PC-3 (cell line): ENCODE measurements at regions of chr3 and their contacts with region 1.

Region 1: DNA sequence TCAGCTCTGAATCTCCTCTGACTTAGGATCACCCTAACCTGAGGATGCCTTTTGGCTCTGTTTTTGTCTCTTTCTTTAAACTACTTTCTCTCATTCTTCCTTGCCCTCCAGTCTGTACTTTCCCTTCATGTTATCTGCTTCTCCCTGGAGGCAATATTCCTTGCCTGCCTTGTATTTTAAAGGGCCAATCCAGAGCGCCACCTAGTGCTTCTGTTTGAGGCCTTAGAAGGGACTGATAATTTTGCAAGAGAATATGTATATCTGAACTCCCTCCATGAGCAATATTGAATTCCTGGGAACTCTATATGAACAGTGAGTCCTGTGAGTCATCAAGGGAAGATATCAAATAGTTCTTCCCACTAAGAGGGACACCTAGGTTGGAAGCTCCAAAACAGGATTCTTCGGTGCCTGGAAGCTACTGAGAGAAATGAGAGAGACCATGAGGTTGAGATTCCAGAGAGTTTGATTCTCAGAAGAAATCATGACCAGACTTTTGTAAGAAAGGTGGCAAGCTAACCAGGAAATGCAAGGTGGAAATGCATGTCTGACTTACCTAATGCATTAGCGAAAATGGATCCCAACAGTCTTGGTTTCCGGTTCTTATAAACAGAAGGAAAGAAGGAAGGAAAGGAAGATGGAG is 203.8 kb upstream of the CD96 start:
- DNase-seq: peak; percentile 92
- ATAC-seq: peak; percentile 89
- H3K4me3 ChIP-seq: no peak overlapping the region
- H3K27ac ChIP-seq: no peak overlapping the region
- H3K4me1 ChIP-seq: peaks cover 19% of the 10 kb centered on the region
- H3K27me3 ChIP-seq: no peaks in the 10 kb centered on the region
- CTCF ChIP-seq: peak; percentile 98

Region 2: DNA sequence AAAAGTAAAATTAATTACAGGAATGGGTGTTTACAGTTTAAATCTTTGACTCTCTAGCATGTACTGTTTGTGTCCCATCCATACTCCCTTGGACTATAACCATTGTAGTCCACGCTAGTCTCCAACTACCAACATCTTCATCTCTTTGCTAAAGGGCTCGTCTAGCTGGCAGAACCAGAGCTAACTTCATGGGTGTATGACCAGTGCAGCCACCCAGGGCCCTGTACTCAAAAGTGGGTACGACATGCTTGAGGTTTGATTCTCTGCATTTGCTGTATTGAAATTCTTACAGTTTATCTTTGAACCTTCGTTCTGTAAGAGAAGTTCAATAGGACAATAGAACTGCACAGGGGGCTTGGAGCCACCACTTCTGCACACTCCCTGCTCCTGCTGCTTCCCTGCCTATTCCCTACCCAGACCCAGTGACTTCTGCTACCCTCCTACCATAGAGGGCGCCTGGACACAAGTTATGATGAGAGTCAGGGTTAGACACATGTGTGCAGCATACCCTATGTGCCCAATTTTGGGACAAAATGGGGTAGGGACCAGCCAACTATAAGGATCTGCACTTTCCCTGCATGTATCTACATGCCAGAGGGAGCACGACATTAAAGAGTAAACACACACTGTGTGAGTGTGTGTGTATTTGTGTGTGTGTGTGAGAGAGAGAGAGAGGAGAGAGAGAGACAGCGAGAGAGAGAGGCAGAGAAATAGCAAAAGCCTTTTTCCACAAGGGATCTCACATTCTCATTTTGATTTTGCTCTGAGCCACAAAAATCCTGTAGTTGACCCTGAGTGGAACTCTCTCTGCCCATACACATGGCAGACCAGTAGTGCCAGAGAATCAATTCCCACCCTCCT is 325.6 kb before region 1 on chr3:
- CTCF ChIA-PET with region 1: no interaction called
- POLR2A ChIA-PET with region 1: no interaction called
- intact Hi-C with region 1: loop called (anchors 10 kb)
- DNase-seq: peak; percentile 60
- ATAC-seq: peak; percentile 98
- H3K4me3 ChIP-seq: no peak overlapping the region
- H3K27ac ChIP-seq: no peak overlapping the region
- H3K4me1 ChIP-seq: no peaks in the 10 kb centered on the region
- H3K27me3 ChIP-seq: no peaks in the 10 kb centered on the region
- CTCF ChIP-seq: peak; percentile 66

Region 3: DNA sequence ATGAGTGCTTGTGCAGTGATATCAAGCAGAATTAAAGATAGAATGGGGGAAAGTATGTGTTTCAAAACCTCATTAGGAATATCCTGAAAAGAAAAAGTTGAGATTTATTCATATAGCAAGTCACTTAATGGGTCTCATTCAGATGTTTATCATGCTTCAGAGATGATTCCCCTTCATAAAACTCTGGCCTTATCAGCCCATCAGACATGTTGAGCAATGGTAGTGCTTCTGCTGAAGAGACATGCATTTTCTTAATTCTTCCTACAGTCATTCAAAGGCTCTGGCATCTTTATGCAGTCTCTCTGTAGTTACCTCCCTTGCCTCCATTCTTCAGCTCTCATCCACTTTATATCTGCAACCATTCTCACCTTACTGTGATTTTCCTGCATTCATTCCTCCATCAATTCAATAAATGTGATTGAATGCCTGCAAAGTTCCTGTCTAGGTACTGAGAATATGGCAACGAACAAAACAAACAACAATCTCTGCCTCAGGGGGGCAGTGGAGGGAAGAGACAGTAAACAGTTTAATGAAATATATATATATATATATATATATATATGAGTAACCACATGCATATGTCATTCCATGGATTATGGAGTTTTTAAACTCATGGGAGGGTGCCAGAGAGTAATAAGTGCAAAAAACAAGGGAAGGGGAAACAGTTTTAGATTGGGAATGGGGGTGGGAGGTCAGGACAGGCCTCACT is 128.0 kb before region 1 on chr3:
- CTCF ChIA-PET with region 1: no interaction called
- POLR2A ChIA-PET with region 1: no interaction called
- intact Hi-C with region 1: loop called (anchors 5 kb)
- DNase-seq: peak; percentile 62
- ATAC-seq: peak; percentile 71
- H3K4me3 ChIP-seq: no peak overlapping the region
- H3K27ac ChIP-seq: no peak overlapping the region
- H3K4me1 ChIP-seq: 0 out of 2 replicates have a peak, but pooled peaks cover 4% of the 10 kb centered on the region
- H3K27me3 ChIP-seq: no peaks in the 10 kb centered on the region
- CTCF ChIP-seq: peak; percentile 43

Region 4: GRCh38 chr3:111277226-111277625 is 61.0 kb before region 1 on chr3:
- CTCF ChIA-PET with region 1: no interaction called
- POLR2A ChIA-PET with region 1: no interaction called
- intact Hi-C with region 1: loop called (anchors 1 kb)
- DNase-seq: peak; percentile 37
- ATAC-seq: peak; percentile 37; the same call in 1 of the 2 replicates
- H3K4me3 ChIP-seq: no peak overlapping the region
- H3K27ac ChIP-seq: no peak overlapping the region
- H3K4me1 ChIP-seq: no peaks in the 10 kb centered on the region
- H3K27me3 ChIP-seq: no peaks in the 10 kb centered on the region
- CTCF ChIP-seq: peak; percentile 51; the same call in 1 of the 2 replicates

Region 5: GRCh38 chr3:111373861-111374260 is 35.7 kb after region 1 on chr3:
- CTCF ChIA-PET with region 1: no interaction called
- POLR2A ChIA-PET with region 1: no interaction called
- intact Hi-C with region 1: no loop called
- DNase-seq: peak; percentile 22
- ATAC-seq: no peak
- H3K4me3 ChIP-seq: no peak overlapping the region
- H3K27ac ChIP-seq: no peak overlapping the region
- H3K4me1 ChIP-seq: no peaks in the 10 kb centered on the region
- H3K27me3 ChIP-seq: no peaks in the 10 kb centered on the region
- CTCF ChIP-seq: no peak